ENCODE measurements at regions of chr6 and their contacts with region 1.

Region 1: DNA sequence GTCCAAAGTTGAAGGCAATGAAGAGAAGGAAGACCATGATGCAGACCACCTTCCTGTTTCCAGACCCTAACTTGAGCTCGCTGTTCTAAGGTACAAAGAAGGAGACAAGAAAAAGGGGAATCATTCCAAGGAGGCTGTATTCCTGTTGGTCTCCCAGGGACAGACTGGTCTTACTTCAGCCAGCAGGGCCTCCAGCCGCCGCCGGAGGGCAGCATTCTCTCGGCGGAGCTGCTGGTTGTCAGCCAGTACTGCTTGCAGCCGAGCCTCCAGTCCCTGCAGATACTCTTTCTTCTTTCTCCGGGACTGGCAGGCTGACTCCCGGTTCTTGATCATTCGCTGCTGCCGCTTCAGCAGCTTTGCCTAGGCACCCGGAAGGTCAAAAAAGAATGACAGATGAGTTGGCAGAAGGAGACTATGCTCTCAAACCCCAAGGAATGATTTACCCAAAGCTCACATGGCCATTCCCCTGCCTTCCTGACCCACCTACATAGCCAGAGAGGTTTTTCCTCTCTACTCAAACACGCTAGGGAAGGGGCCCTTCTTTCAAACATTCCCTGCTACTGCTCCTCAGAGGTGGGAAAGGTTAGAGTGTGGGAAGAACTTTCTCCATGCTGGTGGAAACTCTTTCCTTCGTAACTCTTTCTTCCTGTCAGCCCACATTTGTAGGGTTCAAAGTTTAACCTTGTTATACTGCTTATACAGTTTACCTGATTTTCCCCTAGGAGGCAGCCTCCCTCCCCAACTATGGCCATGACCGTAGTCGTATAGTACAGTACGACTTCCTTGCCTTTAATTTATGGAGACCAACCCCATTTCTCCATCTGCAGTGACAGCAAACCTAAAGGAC is 9.0 kb downstream of the ATF6B start:
- DNase-seq: peak; percentile 84
- ATAC-seq: peak; percentile 90
- H3K4me3 Mint-ChIP-seq: no peak overlapping the region
- H3K27ac Mint-ChIP-seq: no peak overlapping the region
- H3K4me1 Mint-ChIP-seq: peaks cover 4% of the 10 kb centered on the region
- H3K27me3 Mint-ChIP-seq: no peaks in the 10 kb centered on the region
- CTCF ChIP-seq: peak; percentile 80

Region 2: DNA sequence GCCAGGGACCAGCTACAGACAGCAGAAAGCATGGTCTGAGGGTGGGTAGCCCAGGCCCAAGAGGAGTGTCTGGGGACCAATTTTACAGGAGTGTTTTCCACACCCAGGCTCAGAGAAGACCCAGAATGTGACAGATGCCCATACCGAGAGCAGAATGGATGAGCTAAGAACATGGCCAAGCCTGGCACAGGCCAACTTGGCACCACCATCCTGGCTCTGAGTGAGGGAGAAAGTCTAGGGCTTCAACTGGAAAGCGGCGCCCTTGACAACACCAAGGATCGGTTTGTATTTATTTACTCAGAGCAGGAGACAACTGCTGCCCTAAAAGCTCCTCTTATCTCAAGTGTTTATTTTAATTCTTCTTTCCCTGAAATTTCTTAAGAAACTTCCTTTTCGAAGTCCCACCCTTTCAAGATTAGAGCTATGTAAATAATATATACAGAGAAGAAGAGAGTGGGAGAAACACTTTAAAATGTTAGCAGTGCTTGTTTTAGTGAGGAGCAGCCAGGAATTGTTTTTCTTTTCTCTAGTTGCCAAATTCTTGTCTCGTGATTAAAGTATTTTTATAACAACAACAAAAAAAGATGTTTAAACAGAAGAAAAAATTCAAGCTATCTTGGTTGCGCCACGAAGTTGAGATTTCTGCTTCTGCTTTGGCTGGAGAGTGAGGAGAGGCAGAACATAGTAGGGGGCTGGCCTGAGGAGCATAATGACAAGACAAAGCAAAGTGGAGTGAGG is 26.1 kb before region 1 on chr6:
- CTCF ChIA-PET with region 1: interaction called, 38 read pairs
- POLR2A ChIA-PET with region 1: no interaction called
- intact Hi-C with region 1: no loop called
- DNase-seq: no peak
- ATAC-seq: no peak
- H3K4me3 Mint-ChIP-seq: no peak overlapping the region
- H3K27ac Mint-ChIP-seq: no peak overlapping the region
- H3K4me1 Mint-ChIP-seq: peaks cover 2% of the 10 kb centered on the region
- H3K27me3 Mint-ChIP-seq: peaks cover 35% of the 10 kb centered on the region
- CTCF ChIP-seq: no peak

Region 3: GRCh38 chr6:32102255-32102654 is 16.8 kb before region 1 on chr6:
- CTCF ChIA-PET with region 1: interaction called, 25 read pairs
- POLR2A ChIA-PET with region 1: interaction called, 3 read pairs
- intact Hi-C with region 1: no loop called
- DNase-seq: no peak
- ATAC-seq: no peak
- H3K4me3 Mint-ChIP-seq: no peak overlapping the region
- H3K27ac Mint-ChIP-seq: no peak overlapping the region
- H3K4me1 Mint-ChIP-seq: no peaks in the 10 kb centered on the region
- H3K27me3 Mint-ChIP-seq: peaks cover 23% of the 10 kb centered on the region
- CTCF ChIP-seq: no peak

Region 4: GRCh38 chr6:32108094-32108627 is 10.8 kb before region 1 on chr6:
- CTCF ChIA-PET with region 1: interaction called, 25 read pairs
- POLR2A ChIA-PET with region 1: interaction called, 6 read pairs
- intact Hi-C with region 1: no loop called
- DNase-seq: no peak
- ATAC-seq: peak; percentile 55
- H3K4me3 Mint-ChIP-seq: no peak overlapping the region
- H3K27ac Mint-ChIP-seq: no peak overlapping the region
- H3K4me1 Mint-ChIP-seq: peaks cover 17% of the 10 kb centered on the region
- H3K27me3 Mint-ChIP-seq: peaks cover 11% of the 10 kb centered on the region
- CTCF ChIP-seq: no peak

Region 5: GRCh38 chr6:32148289-32149091 is 29.5 kb after region 1 on chr6:
- CTCF ChIA-PET with region 1: interaction called, 21 read pairs
- POLR2A ChIA-PET with region 1: no interaction called
- intact Hi-C with region 1: no loop called
- DNase-seq: peak; percentile 87
- ATAC-seq: peak; percentile 89
- H3K4me3 Mint-ChIP-seq: peak overlapping the region; percentile 78
- H3K27ac Mint-ChIP-seq: peak overlapping the region; percentile 63
- H3K4me1 Mint-ChIP-seq: peaks cover 44% of the 10 kb centered on the region
- H3K27me3 Mint-ChIP-seq: peaks cover 23% of the 10 kb centered on the region
- CTCF ChIP-seq: peak; percentile 57

Region 6: GRCh38 chr6:32154514-32155161 is 35.6 kb after region 1 on chr6:
- CTCF ChIA-PET with region 1: interaction called, 8 read pairs
- POLR2A ChIA-PET with region 1: no interaction called
- intact Hi-C with region 1: loop called (anchors 5 kb)
- DNase-seq: peak; percentile 81
- ATAC-seq: peak; percentile 65
- H3K4me3 Mint-ChIP-seq: peak overlapping the region; percentile 85
- H3K27ac Mint-ChIP-seq: peak overlapping the region; percentile 97
- H3K4me1 Mint-ChIP-seq: peaks cover 41% of the 10 kb centered on the region
- H3K27me3 Mint-ChIP-seq: peaks cover 10% of the 10 kb centered on the region
- CTCF ChIP-seq: peak; percentile 70

Region 7: DNA sequence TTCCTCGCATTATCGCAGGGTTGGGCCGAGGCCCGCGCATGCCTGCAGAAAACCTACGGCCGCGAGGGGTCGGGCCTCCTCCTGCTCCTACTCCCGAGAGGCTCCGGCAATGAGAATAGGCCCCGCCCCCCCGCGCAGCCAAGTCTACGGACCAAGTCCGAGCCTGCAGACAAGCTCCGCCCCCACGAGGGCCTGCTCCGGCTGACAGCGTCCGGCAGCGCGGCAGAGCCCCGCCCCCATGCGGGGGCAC is 76.6 kb after region 1 on chr6:
- CTCF ChIA-PET with region 1: interaction called, 32 read pairs
- POLR2A ChIA-PET with region 1: no interaction called
- intact Hi-C with region 1: no loop called
- DNase-seq: peak; percentile 100
- ATAC-seq: peak; percentile 88
- H3K4me3 Mint-ChIP-seq: peak overlapping the region; percentile 94
- H3K27ac Mint-ChIP-seq: peak overlapping the region; percentile 99
- H3K4me1 Mint-ChIP-seq: peaks cover 22% of the 10 kb centered on the region
- H3K27me3 Mint-ChIP-seq: no peaks in the 10 kb centered on the region
- CTCF ChIP-seq: no peak

Measured in activated CD8-positive, alpha-beta T cell treated with anti-CD3 and anti-CD28 coated beads for 36 hours (primary cell).